Activated CD4-positive, alpha-beta T cell treated with anti-CD3 and anti-CD28 coated beads, Interleukin-2, amount 10 ng/mL, durations not matched to agents 24 days and 14 days (primary cell): ENCODE measurements at regions of chr4 and their contacts with region 1.

Region 1: GRCh38 chr4:112704991-112705845 is 68.3 kb downstream of the LARP7 start:
- DNase-seq: peak; percentile 63
- H3K4me3 Mint-ChIP-seq: peak overlapping the region; percentile 79
- H3K27ac Mint-ChIP-seq: peak overlapping the region; percentile 52
- H3K4me1 Mint-ChIP-seq: peaks cover 16% of the 10 kb centered on the region
- H3K27me3 Mint-ChIP-seq: peaks cover 54% of the 10 kb centered on the region

Region 2: GRCh38 chr4:112515304-112516067 is 189.7 kb before region 1 on chr4:
- intact Hi-C with region 1: loop called (anchors 5 kb)
- DNase-seq: peak; percentile 86
- H3K4me3 Mint-ChIP-seq: peak overlapping the region; percentile 90
- H3K27ac Mint-ChIP-seq: peak overlapping the region; percentile 84
- H3K4me1 Mint-ChIP-seq: peaks cover 50% of the 10 kb centered on the region
- H3K27me3 Mint-ChIP-seq: peaks cover 84% of the 10 kb centered on the region

Region 3: GRCh38 chr4:112735474-112735951 is 30.3 kb after region 1 on chr4:
- intact Hi-C with region 1: loop called (anchors 2 kb)
- DNase-seq: peak; percentile 65
- H3K4me3 Mint-ChIP-seq: no peak overlapping the region
- H3K27ac Mint-ChIP-seq: peak overlapping the region; percentile 57
- H3K4me1 Mint-ChIP-seq: peaks cover 14% of the 10 kb centered on the region
- H3K27me3 Mint-ChIP-seq: no peaks in the 10 kb centered on the region

Region 4: GRCh38 chr4:112765317-112765975 is 60.2 kb after region 1 on chr4:
- intact Hi-C with region 1: loop called (anchors 5 kb)
- DNase-seq: no peak
- H3K4me3 Mint-ChIP-seq: no peak overlapping the region
- H3K27ac Mint-ChIP-seq: no peak overlapping the region
- H3K4me1 Mint-ChIP-seq: peaks cover 2% of the 10 kb centered on the region
- H3K27me3 Mint-ChIP-seq: no peaks in the 10 kb centered on the region